Activated CD8-positive, alpha-beta memory T cell treated with anti-CD3 and anti-CD28 coated beads, Interleukin-2, amount 10 ng/mL, durations not matched to agents 7 days and 5 days (primary cell): ENCODE measurements at regions of chr20 and their contacts with region 1.

Region 1: GRCh38 chr20:2523919-2524708 is 12.3 kb upstream of the TMC2 start:
- DNase-seq: peak; percentile 93
- ATAC-seq: peak; percentile 80
- H3K4me3 Mint-ChIP-seq: peak overlapping the region; percentile 77
- H3K27ac Mint-ChIP-seq: peak overlapping the region; percentile 91
- H3K4me1 Mint-ChIP-seq: peaks cover 25% of the 10 kb centered on the region
- H3K27me3 Mint-ChIP-seq: peaks cover 4% of the 10 kb centered on the region

Region 2: GRCh38 chr20:2470423-2471193 is 53.5 kb before region 1 on chr20 and contains the start of gene SNRPB:
- CTCF ChIA-PET with region 1: interaction called, 16 read pairs
- DNase-seq: peak; percentile 99
- ATAC-seq: peak; percentile 95
- H3K4me3 Mint-ChIP-seq: peak within 1 kb of the TSS; percentile 100
- H3K27ac Mint-ChIP-seq: peak within 1 kb of the TSS; percentile 99
- H3K4me1 Mint-ChIP-seq: peaks cover 54% of the 10 kb centered on the region
- H3K27me3 Mint-ChIP-seq: no peaks in the 10 kb centered on the region
- total RNA-seq, gene SNRPB: 335 to 391 TPM

Region 3: DNA sequence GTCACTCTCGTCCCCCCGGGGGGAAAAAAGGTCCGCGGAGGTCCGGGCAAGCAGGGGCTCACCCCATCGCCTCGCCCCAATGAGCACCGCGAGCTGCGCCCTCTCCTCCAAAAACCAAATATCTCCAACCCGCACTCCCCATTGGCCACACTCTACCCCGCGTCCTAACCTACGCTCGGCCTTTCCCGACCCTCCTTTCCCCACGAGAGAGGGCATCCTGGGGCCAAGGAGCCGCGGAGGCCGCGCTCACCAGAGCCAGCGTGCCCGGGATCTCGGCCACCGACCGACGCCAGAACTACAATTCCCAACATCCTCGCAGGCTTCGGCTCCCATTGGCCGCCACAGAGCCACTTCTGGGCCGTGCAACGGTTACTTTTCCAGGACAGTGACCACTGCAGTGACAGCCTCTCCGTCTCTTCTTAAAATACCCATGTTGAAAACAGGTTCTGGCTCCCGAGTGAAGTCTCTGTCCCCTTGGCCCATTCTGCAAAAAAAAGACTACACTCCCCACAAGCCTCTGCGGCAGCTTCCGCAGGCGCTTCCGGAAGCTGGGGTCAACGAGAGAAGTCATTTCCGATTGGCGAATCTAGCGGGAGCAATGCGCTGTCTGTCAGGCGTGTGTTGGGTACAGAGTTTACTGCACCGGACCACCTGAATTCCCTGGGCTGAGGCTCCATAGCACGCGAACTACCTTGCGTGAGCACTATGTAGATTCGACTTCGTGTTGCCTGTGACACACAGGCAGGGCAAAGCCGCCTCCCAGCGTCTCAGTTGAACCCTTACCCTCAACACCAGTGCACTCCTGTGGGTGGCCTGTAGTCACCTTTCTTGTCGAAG is 15.3 kb before region 1 on chr20 and contains the start of gene ZNF343:
- CTCF ChIA-PET with region 1: interaction called, 109 read pairs
- DNase-seq: peak; percentile 89
- ATAC-seq: peak; percentile 97
- H3K4me3 Mint-ChIP-seq: peak within 1 kb of the TSS; percentile 96
- H3K27ac Mint-ChIP-seq: peak within 1 kb of the TSS; percentile 96
- H3K4me1 Mint-ChIP-seq: peaks cover 20% of the 10 kb centered on the region
- H3K27me3 Mint-ChIP-seq: peaks cover 24% of the 10 kb centered on the region
- total RNA-seq, gene ZNF343: 7.0 to 10.3 TPM

Region 4: DNA sequence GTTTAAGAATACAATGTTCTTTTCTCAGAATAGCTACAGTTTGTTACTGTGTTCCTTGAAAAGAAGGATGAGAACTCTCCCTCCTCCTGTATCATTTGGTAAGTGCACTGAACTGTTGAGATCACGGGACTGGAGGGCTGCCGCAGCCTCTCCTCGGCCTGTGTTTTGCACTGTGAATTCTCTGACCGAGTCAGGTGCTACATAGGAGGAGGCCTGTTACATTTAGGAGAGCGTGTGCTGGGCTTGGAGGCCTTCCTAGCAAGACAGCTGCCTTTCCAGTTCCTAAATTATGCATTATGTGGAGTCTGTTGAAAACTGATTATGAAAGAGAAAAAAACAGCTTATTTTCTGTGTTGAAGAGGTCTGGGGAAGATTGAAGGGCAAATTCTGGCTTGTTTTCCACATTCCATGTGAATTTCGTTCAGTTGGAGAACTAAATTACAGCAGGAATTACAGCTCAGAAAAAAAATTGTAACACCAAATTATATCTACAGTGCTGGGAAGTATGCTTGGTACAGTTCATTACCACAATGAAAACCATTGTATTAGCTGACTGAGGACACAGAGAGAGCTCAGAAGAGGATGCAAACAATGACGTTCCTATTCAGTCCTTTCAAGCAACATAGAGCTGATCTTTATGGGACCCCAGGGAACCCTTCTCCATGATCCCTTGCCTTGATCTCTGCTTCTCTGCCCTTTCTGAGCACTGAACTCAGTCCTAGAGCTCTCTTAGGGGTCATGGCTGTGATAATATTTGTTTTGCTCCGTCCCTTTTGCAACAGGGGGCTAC is 15.0 kb after region 1 on chr20:
- CTCF ChIA-PET with region 1: interaction called, 12 read pairs
- DNase-seq: no peak
- ATAC-seq: no peak
- H3K4me3 Mint-ChIP-seq: no peak overlapping the region
- H3K27ac Mint-ChIP-seq: no peak overlapping the region
- H3K4me1 Mint-ChIP-seq: no peaks in the 10 kb centered on the region
- H3K27me3 Mint-ChIP-seq: peaks cover 46% of the 10 kb centered on the region

Region 5: GRCh38 chr20:2637246-2637645 is 113.1 kb after region 1 on chr20:
- CTCF ChIA-PET with region 1: interaction called, 16 read pairs
- DNase-seq: no peak
- ATAC-seq: no peak
- H3K4me3 Mint-ChIP-seq: no peak overlapping the region
- H3K27ac Mint-ChIP-seq: no peak overlapping the region
- H3K4me1 Mint-ChIP-seq: peaks cover 11% of the 10 kb centered on the region
- H3K27me3 Mint-ChIP-seq: peaks cover 17% of the 10 kb centered on the region

Region 6: DNA sequence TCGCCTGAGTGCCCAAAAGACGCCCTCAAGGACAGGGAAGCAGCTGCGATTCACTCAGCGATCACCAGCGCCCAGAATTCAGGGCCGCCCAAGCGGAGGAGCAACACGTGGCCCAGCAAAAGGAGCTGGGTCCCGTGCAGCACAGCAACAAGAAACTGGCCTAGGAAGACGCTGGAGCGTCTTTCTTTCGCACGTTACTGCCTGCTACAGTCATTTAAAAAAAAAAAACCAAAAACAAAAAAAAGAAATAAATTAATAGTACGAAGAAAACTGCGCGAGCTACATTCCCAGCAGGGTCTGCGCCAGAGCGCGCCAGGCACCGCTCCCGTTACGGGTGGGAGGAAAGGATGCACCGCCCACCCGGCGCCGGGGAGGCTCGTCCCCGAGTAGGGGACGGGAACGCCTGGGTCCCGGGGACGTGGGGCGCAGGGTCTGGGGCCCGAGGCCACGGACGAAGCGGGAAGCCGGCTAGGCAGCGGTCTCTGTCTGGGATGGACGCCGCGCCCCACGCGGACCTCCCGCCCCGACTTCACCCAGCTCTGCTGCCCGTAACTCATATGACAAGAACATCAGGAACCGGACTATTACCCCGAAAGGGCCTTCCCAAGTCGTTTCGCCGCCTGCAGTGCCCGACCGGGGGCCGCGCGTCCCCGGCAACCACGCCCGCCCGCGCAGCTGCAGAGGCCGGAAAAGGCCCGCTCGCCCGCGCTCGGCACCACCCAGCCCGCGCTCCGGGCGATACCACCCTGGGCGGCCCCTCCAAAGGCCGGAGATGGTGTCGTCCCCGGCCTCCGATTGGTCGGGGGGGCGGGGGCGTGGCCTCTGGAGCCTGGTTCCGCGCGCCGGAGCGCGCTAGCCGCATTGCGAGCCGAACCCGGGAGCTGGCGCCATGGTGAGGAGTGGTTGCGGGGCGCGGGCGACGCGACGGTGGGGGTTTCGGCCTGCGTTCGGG is 127.9 kb after region 1 on chr20 and contains the start of gene NOP56:
- CTCF ChIA-PET with region 1: interaction called, 39 read pairs
- DNase-seq: peak; percentile 94
- ATAC-seq: peak; percentile 92
- H3K4me3 Mint-ChIP-seq: peak within 1 kb of the TSS; percentile 91
- H3K27ac Mint-ChIP-seq: peak within 1 kb of the TSS; percentile 87
- H3K4me1 Mint-ChIP-seq: peaks cover 50% of the 10 kb centered on the region
- H3K27me3 Mint-ChIP-seq: no peaks in the 10 kb centered on the region
- total RNA-seq, gene NOP56: 469 to 508 TPM